Naive thymus-derived CD8-positive, alpha-beta T cell (primary cell): ENCODE measurements at regions of chr2 and their contacts with region 1.

Region 1: DNA sequence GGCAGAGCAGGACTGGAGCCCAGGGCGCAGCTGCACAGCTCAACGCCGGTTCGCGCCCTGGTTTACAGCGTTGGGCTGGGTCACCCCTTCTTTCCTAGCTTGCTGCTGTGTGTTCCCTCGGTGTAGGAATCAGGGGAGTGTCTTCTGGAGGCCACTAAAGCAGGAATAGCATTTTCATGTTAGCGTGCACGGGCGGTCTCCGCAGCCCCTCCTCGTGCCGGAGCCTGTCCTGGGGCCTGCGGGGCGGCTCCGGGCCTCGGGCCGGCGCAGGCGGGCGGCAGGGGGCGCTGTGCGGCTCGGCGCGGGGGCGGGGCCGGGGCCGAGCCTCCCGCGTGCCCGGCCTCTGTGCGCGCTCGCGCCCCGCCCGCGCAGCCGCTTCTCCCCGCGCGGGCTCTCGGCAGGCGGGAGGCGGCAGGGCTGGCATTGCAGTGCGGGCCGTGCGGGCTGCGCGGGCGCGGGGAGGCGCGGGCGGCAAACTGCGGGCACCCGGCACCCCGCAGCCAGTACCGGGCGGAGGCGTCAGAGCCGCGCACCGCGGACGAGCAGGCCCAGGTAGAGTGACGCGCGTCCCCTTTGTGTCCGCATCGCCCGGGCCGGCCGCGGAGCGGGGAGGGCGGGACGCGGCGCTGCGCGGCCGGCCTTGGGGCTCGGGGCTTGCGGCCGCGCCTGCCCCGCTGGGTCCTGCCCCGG is at the start of gene RNF144A:
- DNase-seq: peak; percentile 57 to 89 (median 78)
- ATAC-seq: peak; percentile 73 to 76
- H3K4me3 Mint-ChIP-seq: peak within 1 kb of the TSS; percentile 72 to 89 (median 78)
- H3K27ac Mint-ChIP-seq: peak within 1 kb of the TSS; percentile 36 to 92 (median 82)
- H3K4me1 Mint-ChIP-seq: peaks cover 46 to 85% (median 77%) of the 10 kb centered on the region in 4 donors
- H3K27me3 Mint-ChIP-seq: no peaks in the 10 kb centered on the region
- polyA plus RNA-seq, gene RNF144A: 10.3 to 15.5 (median 15.2) TPM

Region 2: DNA sequence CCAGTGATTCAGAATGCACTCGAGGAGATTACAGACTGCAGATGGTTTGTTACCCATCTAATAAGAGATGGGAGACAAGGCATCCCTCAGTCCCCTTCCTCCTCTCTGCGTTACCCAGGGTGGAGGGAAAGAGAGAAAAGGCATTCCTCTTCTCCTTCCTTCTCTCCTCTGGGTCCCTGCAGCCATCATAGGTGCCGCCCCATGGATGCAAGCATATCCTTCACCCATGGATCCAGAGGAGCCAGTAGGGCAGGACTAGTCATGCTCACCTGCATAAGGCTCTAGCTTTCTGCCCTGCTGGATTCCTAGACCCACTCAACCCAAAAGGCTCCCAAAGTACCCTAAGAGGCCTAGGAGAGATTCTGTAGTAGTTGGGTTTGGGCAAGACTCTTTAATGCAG is 71.9 kb before region 1 on chr2:
- POLR2A ChIA-PET with region 1: no interaction called
- DNase-seq: peak in 1 of 10 donors; percentile 11
- ATAC-seq: no peak
- H3K4me3 Mint-ChIP-seq: no peak overlapping the region
- H3K27ac Mint-ChIP-seq: no peak overlapping the region
- H3K4me1 Mint-ChIP-seq: peaks cover 0 to 1% (median 0%) of the 10 kb centered on the region in 4 donors
- H3K27me3 Mint-ChIP-seq: no peaks in the 10 kb centered on the region

Region 3: GRCh38 chr2:6865346-6866274 is 51.6 kb before region 1 on chr2 and contains the start of gene CMPK2:
- POLR2A ChIA-PET with region 1: interaction called, 13 read pairs
- DNase-seq: peak; percentile 67 to 84 (median 76)
- ATAC-seq: peak; percentile 76
- H3K4me3 Mint-ChIP-seq: peak within 1 kb of the TSS; percentile 90 to 100 (median 97)
- H3K27ac Mint-ChIP-seq: peak within 1 kb of the TSS; percentile 87 to 100 (median 94)
- H3K4me1 Mint-ChIP-seq: peaks cover 10 to 46% (median 26%) of the 10 kb centered on the region in 4 donors
- H3K27me3 Mint-ChIP-seq: no peaks in the 10 kb centered on the region
- polyA plus RNA-seq, gene CMPK2: 4.5 to 7.3 (median 4.6) TPM

Region 4: DNA sequence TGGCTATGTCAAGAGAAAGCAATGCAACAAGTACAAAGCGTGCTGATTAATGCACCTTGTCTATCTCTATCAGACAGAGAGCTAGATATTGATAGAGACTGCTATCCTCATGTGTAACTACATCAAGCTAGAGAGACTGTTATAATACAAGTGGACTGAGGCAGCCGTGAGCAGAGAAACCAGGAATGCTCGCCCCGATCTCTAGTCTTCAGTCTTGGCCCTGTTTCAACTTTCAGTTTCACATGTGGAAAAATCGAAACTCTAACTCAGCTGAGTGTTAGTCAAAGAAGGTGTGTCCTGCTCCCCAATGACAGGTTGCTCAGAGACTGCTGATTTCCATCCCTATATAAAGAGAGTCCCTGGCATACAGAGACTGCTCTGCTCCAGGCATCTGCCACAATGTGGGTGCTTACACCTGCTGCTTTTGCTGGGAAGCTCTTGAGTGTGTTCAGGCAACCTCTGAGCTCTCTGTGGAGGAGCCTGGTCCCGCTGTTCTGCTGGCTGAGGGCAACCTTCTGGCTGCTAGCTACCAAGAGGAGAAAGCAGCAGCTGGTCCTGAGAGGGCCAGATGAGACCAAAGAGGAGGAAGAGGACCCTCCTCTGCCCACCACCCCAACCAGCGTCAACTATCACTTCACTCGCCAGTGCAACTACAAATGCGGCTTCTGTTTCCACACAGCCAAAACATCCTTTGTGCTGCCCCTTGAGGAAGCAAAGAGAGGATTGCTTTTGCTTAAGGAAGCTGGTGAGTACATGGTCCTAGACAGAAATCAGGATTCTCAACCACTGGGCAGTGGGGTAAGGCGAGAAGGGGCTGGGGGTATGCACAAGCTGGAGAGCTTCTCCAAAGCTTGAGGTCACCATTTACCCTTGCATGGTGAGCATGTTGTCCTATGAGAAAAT is 39.6 kb before region 1 on chr2 and contains the start of gene RSAD2:
- POLR2A ChIA-PET with region 1: interaction called, 11 read pairs
- DNase-seq: peak in 7 of 10 donors; percentile 9 to 68 (median 38)
- ATAC-seq: peak; percentile 81 to 84
- H3K4me3 Mint-ChIP-seq: peak within 1 kb of the TSS; percentile 85 to 98 (median 90)
- H3K27ac Mint-ChIP-seq: peak within 1 kb of the TSS; percentile 86 to 98 (median 93)
- H3K4me1 Mint-ChIP-seq: peaks cover 34 to 88% (median 68%) of the 10 kb centered on the region in 4 donors
- H3K27me3 Mint-ChIP-seq: no peaks in the 10 kb centered on the region
- polyA plus RNA-seq, gene RSAD2: 4.0 to 11.1 (median 6.5) TPM

Region 5: DNA sequence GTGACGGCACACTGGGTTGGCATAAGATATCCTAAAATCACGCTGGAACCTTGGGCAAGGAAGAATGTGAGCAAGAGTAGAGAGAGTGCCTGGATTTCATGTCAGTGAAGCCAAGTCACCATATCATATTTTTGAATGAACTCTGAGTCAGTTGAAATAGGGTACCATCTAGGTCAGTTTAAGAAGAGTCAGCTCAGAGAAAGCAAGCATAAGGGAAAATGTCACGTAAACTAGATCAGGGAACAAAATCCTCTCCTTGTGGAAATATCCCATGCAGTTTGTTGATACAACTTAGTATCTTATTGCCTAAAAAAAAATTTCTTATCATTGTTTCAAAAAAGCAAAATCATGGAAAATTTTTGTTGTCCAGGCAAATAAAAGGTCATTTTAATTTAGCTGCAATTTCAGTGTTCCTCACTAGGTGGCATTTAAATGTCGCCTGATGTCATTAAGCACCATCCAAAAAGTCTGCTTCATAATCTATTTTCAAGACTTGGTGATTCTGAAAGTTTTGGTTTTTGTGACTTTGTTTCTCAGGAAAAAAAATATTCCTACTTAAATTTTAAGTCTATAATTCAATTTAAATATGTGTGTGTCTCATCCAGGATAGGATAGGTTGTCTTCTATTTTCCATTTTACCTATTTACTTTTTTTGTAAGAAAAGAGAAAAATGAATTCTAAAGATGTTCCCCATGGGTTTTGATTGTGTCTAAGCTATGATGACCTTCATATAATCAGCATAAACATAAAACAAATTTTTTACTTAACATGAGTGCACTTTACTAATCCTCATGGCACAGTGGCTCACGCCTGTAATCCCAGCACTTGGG is 20.1 kb before region 1 on chr2:
- POLR2A ChIA-PET with region 1: interaction called, 15 read pairs
- DNase-seq: peak in 3 of 10 donors; percentile 56 to 61 (median 58)
- ATAC-seq: peak in 1 of 2 donors; percentile 47
- H3K4me3 Mint-ChIP-seq: no peak overlapping the region
- H3K27ac Mint-ChIP-seq: peak overlapping the region in 2 of 10 donors; percentile 13 to 36
- H3K4me1 Mint-ChIP-seq: peaks cover 2 to 16% (median 9%) of the 10 kb centered on the region in 4 donors
- H3K27me3 Mint-ChIP-seq: no peaks in the 10 kb centered on the region